GM10248 (cell line): ENCODE measurements at regions of chr1 and their contacts with region 1.

Region 1: GRCh38 chr1:48677306-48678287 is 99.1 kb downstream of the BEND5 start:
- DNase-seq: peak; percentile 41
- CTCF ChIP-seq: peak; percentile 75

Region 2: GRCh38 chr1:48640836-48641492 is 36.6 kb before region 1 on chr1:
- CTCF ChIA-PET with region 1: interaction called, 11 read pairs
- POLR2A ChIA-PET with region 1: no interaction called
- DNase-seq: no peak
- CTCF ChIP-seq: no peak

Region 3: GRCh38 chr1:48654606-48655210 is 22.9 kb before region 1 on chr1:
- CTCF ChIA-PET with region 1: interaction called, 15 read pairs
- POLR2A ChIA-PET with region 1: no interaction called
- DNase-seq: no peak
- CTCF ChIP-seq: no peak

Region 4: GRCh38 chr1:48659801-48660200 is 17.8 kb before region 1 on chr1:
- CTCF ChIA-PET with region 1: interaction called, 15 read pairs
- POLR2A ChIA-PET with region 1: no interaction called
- DNase-seq: no peak
- CTCF ChIP-seq: no peak

Region 5: DNA sequence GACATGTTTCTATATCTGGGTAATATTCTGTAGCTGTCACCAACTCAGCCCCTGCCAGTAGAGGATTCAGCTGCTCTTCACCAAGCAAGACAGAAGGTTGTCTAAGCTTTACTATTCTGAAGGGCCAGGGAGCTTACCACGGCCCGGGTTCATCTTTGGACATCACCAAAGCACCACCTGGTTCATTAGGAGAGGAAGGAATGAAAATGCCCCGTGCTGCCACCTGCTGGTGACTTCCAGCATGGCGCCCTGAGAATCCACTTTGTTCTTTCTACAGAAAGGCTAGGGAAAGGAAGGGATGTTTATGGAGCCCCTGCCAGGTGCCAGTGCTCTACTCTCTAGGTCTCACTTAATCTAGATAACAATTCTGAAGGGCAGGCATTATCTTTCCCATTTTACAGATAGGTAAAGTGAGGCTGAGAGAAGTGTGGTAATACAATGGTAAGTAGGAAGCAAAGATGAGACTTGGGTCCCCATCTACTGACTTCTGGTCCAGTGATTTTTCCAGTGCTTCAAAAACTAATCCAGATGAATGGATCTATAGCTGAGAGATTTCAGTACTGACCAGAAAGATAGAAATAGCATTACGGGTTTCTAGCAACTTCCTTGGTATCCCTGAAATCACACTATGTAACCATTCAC is 19.6 kb after region 1 on chr1:
- CTCF ChIA-PET with region 1: interaction called, 281 read pairs
- POLR2A ChIA-PET with region 1: no interaction called
- DNase-seq: peak; percentile 54
- CTCF ChIP-seq: peak; percentile 92

Region 6: GRCh38 chr1:48704736-48705135 is 27.1 kb after region 1 on chr1:
- CTCF ChIA-PET with region 1: interaction called, 281 read pairs
- POLR2A ChIA-PET with region 1: no interaction called
- DNase-seq: no peak
- CTCF ChIP-seq: no peak

Region 7: GRCh38 chr1:48817505-48818114 is 140.0 kb after region 1 on chr1:
- CTCF ChIA-PET with region 1: interaction called, 128 read pairs
- POLR2A ChIA-PET with region 1: no interaction called
- DNase-seq: peak; percentile 35
- CTCF ChIP-seq: peak; percentile 95

Region 8: DNA sequence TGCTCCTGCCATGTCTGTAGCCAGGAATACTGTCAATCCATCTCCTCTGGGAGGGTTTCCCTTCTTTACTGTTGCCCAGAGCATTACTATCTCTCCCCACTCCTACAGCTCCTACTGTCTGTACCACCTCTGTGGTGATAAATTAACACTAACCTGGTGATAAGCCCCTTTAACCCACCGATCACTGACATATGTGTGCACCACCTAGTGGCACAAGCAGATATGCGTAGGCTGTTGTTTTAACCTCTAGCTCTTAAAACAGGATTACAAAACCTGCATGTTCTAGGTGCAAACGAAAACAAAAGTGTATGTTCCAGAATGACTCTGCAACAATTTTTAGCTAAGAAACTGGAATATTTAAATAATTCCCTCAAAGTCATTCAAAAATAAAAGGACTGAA is 193.0 kb after region 1 on chr1:
- CTCF ChIA-PET with region 1: no interaction called
- POLR2A ChIA-PET with region 1: no interaction called
- DNase-seq: no peak
- CTCF ChIP-seq: peak; percentile 40